Activated CD8-positive, alpha-beta T cell treated with anti-CD3 and anti-CD28 coated beads for 36 hours (primary cell): ENCODE measurements at regions of chr6 and their contacts with region 1.

Region 1: DNA sequence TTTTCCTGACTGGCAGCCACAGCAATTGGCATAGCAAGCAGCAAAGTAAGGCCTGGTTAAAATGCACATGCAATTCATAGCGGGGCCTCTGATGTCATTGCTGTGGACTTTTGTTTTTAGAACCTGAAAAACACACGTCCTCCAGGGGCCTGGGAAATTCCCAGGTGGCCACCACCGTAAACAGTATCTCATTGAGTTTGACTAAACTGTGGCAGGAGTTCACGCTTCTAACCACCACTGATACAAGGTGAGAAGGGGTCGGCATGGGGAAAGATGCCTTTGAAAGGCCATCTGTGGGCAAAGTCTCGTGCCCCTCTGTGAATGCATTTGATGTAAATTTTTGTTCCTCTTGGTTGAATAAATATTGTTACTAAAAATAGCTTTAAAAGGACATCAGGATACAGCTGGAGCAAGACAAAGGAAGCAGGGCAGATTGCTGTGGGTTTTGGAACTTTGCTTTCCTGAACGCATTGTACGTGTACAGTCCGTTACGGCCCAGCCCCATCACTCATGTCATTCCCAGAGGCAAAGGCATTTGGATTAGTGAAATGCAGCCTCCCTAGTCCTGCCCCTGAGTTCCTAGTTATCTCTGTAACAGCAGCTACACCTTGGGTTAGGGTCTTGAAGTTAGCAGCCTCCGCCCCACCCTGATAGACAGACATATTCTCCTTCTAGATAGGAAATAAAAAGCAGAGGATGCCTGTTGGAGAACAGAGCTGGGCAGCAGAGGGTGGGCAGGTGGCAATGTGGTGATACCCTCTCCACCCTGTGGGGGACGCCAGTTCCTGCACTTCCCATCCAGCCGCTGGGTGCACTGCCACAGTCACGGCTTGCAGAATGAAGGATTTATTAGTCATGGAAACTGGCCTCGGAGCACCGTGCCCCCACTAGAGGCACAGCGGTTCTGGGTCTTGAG is 80.3 kb downstream of the ZDHHC14 start:
- DNase-seq: peak; percentile 94
- ATAC-seq: peak; percentile 65
- H3K4me3 Mint-ChIP-seq: peak overlapping the region; percentile 2
- H3K27ac Mint-ChIP-seq: peak overlapping the region; percentile 92
- H3K4me1 Mint-ChIP-seq: peaks cover 59% of the 10 kb centered on the region
- H3K27me3 Mint-ChIP-seq: peaks cover 2% of the 10 kb centered on the region
- CTCF ChIP-seq: peak; percentile 28

Region 2: DNA sequence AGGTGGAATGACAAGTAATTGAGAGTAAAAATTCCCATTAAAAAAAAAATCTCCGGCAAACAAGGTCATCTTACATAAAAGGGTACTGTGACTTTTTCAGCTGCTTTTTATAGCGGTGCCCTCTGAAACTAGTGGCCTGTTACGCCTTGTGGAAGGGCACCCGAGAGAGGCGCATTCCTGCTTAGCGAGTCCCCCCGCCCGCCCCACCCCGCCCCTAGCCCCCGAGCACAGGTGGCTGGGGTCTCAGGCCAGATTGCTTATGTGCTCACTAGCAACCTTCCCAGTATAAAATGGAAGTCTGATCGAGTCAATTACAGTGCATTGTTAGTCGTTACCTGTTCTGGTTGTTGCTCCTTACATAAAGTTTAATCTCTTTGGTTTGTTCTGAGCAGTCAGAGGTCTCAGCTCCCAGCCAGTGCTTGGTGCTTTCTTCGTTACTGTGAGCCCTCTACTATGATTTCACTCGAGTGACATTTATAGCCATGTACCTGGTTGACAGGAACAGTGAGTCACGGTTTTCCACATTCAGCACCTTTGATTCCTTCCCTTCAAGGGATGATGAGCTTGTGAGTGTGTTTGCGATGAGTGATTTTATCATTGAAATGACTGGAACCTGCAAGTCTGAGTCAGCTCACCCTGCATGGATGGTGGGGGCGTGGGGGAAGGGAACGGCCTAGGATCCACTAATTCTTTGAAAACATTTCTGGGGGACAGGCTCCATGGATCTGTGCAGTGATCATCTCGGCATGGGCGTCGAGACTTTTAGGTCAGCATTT is 32.6 kb before region 1 on chr6:
- CTCF ChIA-PET with region 1: no interaction called
- POLR2A ChIA-PET with region 1: no interaction called
- intact Hi-C with region 1: no loop called
- DNase-seq: peak; percentile 75
- ATAC-seq: peak; percentile 88
- H3K4me3 Mint-ChIP-seq: no peak overlapping the region
- H3K27ac Mint-ChIP-seq: peak overlapping the region; percentile 55
- H3K4me1 Mint-ChIP-seq: peaks cover 22% of the 10 kb centered on the region
- H3K27me3 Mint-ChIP-seq: no peaks in the 10 kb centered on the region
- CTCF ChIP-seq: no peak

Region 3: DNA sequence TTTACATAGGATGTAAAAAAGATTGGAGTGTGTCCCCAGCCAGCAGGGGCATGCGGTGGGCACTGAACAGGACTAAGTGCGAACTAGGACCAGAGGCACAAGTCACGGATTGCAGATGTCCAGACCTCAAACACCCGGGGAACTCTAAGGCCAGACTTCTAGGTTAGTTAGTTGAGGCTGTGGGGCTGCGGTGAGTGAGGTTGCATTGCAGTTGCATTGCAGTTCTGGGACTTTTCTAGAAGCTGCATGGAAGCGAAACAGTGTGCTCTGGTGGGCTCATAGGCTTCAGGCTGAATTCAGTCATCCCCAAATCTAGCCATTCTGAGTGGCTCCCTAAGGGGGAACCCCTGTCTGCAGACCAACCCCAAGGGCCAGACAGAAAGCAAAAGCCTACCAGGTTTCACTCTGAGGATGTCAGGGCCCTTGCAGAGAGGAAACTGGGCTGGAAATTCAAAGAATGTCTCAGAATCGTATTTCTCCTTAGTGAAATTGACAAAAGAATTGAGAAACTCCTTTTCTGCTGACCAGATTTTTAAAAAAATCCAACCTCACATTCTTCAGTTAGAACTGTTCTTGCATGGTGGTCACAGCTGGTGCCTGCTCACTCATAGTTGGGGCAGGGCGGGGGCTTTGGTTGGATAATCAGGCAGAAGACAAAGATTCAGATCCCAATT is 102.5 kb after region 1 on chr6:
- CTCF ChIA-PET with region 1: no interaction called
- POLR2A ChIA-PET with region 1: interaction called, 3 read pairs
- intact Hi-C with region 1: loop called (anchors 10 kb)
- DNase-seq: peak; percentile 53
- ATAC-seq: peak; percentile 94
- H3K4me3 Mint-ChIP-seq: no peak overlapping the region
- H3K27ac Mint-ChIP-seq: no peak overlapping the region
- H3K4me1 Mint-ChIP-seq: peaks cover 41% of the 10 kb centered on the region
- H3K27me3 Mint-ChIP-seq: no peaks in the 10 kb centered on the region
- CTCF ChIP-seq: no peak